GM12878 (cell line): ENCODE measurements at regions of chr1 and their contacts with region 1.

Region 1: DNA sequence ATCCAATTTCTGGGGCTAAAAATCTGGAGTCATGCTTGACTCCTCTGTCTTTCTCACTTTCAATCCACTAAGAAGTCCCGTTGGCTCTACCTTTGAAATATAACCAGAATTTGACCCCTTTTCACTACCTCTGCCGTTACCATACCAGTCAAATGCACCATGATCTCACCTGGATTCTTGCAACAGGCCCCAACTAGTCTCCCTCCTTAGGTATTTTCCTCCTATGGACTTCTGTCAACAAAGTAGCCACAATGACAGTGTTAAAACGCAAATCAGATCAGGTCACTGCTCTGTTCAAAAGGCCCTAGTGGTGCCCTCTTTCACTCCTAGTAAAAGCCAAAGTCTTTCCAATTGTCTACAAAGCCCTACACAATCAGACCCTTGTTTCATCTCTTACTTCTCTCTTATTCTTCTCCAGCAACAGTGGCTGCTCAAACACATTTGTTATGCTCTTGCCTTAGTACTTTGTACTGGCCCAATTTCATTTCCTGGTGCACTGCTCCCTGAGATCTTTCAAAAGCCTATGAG is 35.7 kb upstream of the AGL start:
- DNase-seq: no peak
- ATAC-seq: no peak
- H3K4me3 ChIP-seq: no peak overlapping the region
- H3K27ac ChIP-seq: no peak overlapping the region
- H3K4me1 ChIP-seq: no peaks in the 10 kb centered on the region
- H3K27me3 ChIP-seq: no peaks in the 10 kb centered on the region
- CTCF ChIP-seq: no peak
- EP300 ChIP-seq: no peak
- POLR2A ChIP-seq: no peak
- RAD21 ChIP-seq: no peak

Region 2: GRCh38 chr1:99860703-99861102 is 46.3 kb after region 1 on chr1:
- CTCF ChIA-PET with region 1: no interaction called
- POLR2A ChIA-PET with region 1: no interaction called
- RAD21 ChIA-PET with region 1: no interaction called
- SMC1A ChIA-PET with region 1: interaction called, 3 read pairs
- in situ Hi-C with region 1: no loop called
- intact Hi-C with region 1: loop called (anchors 5 kb)
- DNase-seq: no peak
- ATAC-seq: no peak
- H3K4me3 ChIP-seq: no peak overlapping the region
- H3K27ac ChIP-seq: no peak overlapping the region
- H3K4me1 ChIP-seq: no peaks in the 10 kb centered on the region
- H3K27me3 ChIP-seq: no peaks in the 10 kb centered on the region
- CTCF ChIP-seq: no peak
- EP300 ChIP-seq: no peak
- POLR2A ChIP-seq: no peak
- RAD21 ChIP-seq: no peak